A673 (cell line): ENCODE measurements at regions of chr2 and their contacts with region 1.

Region 1: GRCh38 chr2:216777650-216778273 is 82.1 kb downstream of the TNP1 start:
- DNase-seq: peak; percentile 88
- H3K4me3 ChIP-seq: no peak overlapping the region
- H3K27ac ChIP-seq: no peak overlapping the region
- H3K4me1 ChIP-seq: no peaks in the 10 kb centered on the region
- H3K27me3 ChIP-seq: no peaks in the 10 kb centered on the region
- CTCF ChIP-seq: peak; percentile 90

Region 2: DNA sequence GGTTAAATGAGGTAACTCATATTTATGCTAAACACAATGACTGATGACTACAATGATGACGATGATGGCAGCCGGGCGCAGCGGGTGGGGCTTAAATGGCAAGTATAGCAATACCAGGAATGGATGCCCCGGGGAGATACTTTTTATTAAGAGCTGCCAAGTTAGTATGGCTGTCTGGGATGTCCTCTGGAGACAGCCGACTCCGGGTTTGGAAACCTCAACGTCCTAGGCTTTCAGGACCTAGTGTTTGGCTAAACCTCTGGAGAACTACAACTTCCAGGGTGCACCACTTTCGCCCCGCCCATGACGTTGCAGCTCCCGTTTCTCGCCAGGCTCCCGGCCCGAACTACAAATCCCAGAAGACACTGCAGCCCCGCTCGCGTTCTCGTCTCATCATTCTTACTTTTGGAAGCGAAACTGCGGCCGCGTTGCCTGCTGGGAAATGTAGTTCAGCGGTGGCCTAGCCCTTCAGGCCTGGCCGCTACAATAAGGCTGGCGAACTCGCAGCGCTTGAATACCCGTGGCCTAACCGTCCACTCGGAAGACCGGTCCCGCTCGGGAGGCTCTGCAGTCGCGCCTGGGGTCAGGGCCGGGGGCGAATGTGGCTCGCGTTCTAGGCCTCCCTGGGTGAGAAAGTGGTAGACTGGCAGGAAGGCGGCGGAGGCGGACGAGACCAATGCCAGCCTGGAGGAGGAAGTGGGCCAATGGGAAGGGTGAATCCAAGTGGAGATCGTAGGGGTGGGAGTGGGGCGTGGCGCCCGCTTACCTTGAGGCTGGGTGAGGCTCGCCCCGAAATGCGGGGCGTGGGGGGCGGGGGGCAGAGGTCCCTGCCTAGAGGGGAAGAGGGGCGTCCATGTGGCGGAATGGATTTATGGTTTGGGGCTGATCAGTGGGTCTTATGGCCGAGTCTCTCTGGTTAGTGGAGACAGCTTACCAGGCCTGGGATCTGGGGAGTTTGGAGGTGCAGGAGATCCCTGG is 365.5 kb before region 1 on chr2 and contains the start of gene SMARCAL1:
- CTCF ChIA-PET with region 1: no interaction called
- POLR2A ChIA-PET with region 1: no interaction called
- intact Hi-C with region 1: no loop called
- DNase-seq: peak; percentile 99
- H3K4me3 ChIP-seq: peak within 1 kb of the TSS; percentile 78
- H3K27ac ChIP-seq: peak within 1 kb of the TSS; percentile 97
- H3K4me1 ChIP-seq: no peaks in the 10 kb centered on the region
- H3K27me3 ChIP-seq: no peaks in the 10 kb centered on the region
- CTCF ChIP-seq: no peak
- total RNA-seq, gene SMARCAL1: 20.7 and 21.4 TPM in 2 replicates

Region 3: DNA sequence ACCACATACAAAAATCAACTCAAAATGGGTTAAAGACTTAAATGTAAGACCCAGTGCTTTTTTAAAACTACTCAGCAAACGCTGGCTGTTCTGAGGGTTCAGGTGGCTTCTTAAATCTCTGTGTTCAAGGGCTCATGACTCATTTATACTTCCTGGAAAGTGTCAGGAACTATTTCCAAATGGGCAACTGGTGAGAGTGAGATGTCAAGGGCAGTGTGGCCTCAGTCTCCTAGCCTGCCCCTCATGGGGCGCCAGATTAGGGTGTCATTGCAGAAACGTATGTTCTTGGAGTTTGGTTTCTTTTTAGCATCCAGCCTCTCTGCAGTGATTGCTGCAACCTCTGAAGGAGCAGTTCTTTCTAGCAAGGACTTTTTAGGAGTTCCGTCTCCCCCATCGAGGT is 739.6 kb after region 1 on chr2:
- CTCF ChIA-PET with region 1: no interaction called
- POLR2A ChIA-PET with region 1: no interaction called
- intact Hi-C with region 1: loop called (anchors 2 kb)
- DNase-seq: no peak
- H3K4me3 ChIP-seq: no peak overlapping the region
- H3K27ac ChIP-seq: no peak overlapping the region
- H3K4me1 ChIP-seq: no peaks in the 10 kb centered on the region
- H3K27me3 ChIP-seq: no peaks in the 10 kb centered on the region
- CTCF ChIP-seq: no peak